Calu3 (cell line): ENCODE measurements at regions of chr10 and their contacts with region 1.

Region 1: DNA sequence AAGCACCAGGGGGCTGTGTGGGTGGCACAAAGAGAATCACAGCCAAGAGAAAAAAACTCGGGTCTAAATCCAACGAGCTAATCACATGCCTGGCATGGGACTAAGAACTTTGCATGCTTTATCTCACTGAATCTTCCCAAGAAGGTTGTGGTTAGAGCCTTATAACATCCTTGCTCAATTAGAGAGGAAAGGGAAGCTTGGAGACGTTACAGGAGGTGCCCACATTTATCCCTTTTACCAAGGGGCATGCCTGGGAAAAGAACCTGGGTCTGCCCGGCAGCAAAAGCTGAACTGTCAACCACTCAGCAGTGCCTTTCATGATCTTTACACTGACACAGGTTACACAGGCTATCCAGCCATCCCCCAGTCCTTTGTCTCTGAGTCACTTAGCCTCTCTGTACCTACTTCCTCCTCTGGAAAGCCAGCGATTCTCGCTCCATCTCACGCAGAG is 190.1 kb downstream of the PRPF18 start:
- DNase-seq: no peak
- H3K4me3 Mint-ChIP-seq: no peak overlapping the region
- H3K27ac Mint-ChIP-seq: no peak overlapping the region
- H3K4me1 Mint-ChIP-seq: peaks cover 18% of the 10 kb centered on the region
- H3K27me3 Mint-ChIP-seq: no peaks in the 10 kb centered on the region
- CTCF ChIP-seq: no peak

Region 2: DNA sequence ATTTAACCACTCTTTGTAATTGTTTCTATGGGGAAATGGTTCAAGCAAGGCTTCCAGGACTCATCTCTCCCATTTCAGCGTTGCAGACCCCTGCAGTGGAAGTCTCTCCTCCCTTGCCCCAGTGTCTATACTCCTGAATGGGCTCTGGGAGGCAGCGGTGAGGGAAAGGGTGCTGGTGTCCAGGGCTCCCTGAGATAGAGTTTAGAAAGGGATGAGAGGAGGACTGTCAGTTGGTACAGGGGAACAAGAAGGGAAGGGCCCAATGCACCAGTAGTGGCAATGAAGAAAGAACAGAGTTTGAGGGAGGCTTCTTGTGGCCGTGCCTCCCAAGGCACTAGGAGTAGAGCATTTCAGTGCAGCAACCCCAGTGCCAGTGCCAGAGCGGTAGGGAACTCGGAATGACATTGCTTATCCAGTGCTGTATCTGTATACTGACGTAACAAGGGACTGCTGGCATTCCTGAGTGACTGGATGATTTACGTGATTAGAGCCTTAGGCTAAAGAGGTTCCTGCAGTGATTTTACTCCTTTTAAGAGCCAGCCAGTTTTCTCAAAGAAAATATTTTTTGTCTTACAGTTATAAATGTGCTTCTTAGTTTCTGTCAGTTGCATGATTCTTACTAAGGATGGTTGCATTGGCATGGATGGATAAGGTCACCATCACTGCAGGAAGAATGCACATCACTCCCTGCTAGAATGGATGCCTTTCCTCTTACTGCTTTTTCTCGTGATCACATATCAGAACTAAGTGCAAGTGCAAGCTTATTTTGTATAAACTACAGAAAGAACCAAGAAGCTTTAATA is 162.2 kb before region 1 on chr10:
- CTCF ChIA-PET with region 1: no interaction called
- intact Hi-C with region 1: loop called (anchors 1 kb)
- DNase-seq: no peak
- H3K4me3 Mint-ChIP-seq: no peak overlapping the region
- H3K27ac Mint-ChIP-seq: no peak overlapping the region
- H3K4me1 Mint-ChIP-seq: no peaks in the 10 kb centered on the region
- H3K27me3 Mint-ChIP-seq: no peaks in the 10 kb centered on the region
- CTCF ChIP-seq: no peak

Region 3: GRCh38 chr10:13659897-13660550 is 116.9 kb before region 1 on chr10:
- CTCF ChIA-PET with region 1: no interaction called
- intact Hi-C with region 1: loop called (anchors 1 kb)
- DNase-seq: peak; percentile 53
- H3K4me3 Mint-ChIP-seq: no peak overlapping the region
- H3K27ac Mint-ChIP-seq: no peak overlapping the region
- H3K4me1 Mint-ChIP-seq: no peaks in the 10 kb centered on the region
- H3K27me3 Mint-ChIP-seq: no peaks in the 10 kb centered on the region
- CTCF ChIP-seq: peak; percentile 78

Region 4: DNA sequence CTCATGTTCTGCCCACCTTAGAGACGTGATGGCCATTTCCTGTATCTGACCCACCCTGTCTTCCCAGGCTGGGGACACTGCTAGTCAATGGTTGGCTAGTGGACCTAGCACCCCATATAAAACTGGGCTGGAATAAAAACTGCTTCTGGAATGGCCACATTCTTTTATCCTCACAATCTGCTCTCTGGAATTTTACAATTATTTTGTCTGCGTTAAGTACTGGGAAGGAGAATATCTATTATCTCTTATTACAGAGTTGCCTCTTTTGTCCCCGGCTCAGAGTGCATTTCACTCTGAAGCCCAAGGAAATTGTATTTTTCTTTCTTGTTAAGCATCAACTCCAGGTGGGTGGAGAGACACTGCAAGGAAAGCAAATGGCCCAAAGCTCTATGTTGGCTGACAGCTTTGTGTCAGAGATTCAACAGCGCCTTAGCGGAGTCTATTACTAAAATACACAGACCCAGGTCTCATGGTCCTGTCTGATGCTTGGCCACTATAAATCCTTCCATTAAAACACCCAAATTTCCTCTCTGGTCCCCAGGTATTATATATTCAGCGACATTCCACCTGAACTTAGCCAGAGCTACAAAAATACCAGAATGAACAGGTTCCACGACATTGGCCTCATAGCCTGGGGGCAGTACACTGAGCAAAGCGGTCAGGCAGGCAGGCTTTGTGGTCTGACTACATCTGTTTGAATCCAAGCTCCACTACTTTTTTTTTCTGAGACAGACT is 68.5 kb before region 1 on chr10:
- CTCF ChIA-PET with region 1: interaction called, 3 read pairs
- intact Hi-C with region 1: loop called (anchors 2 kb)
- DNase-seq: peak; percentile 74
- H3K4me3 Mint-ChIP-seq: peak overlapping the region; percentile 80
- H3K27ac Mint-ChIP-seq: peak overlapping the region; percentile 65
- H3K4me1 Mint-ChIP-seq: peaks cover 43% of the 10 kb centered on the region
- H3K27me3 Mint-ChIP-seq: no peaks in the 10 kb centered on the region
- CTCF ChIP-seq: no peak

Region 5: DNA sequence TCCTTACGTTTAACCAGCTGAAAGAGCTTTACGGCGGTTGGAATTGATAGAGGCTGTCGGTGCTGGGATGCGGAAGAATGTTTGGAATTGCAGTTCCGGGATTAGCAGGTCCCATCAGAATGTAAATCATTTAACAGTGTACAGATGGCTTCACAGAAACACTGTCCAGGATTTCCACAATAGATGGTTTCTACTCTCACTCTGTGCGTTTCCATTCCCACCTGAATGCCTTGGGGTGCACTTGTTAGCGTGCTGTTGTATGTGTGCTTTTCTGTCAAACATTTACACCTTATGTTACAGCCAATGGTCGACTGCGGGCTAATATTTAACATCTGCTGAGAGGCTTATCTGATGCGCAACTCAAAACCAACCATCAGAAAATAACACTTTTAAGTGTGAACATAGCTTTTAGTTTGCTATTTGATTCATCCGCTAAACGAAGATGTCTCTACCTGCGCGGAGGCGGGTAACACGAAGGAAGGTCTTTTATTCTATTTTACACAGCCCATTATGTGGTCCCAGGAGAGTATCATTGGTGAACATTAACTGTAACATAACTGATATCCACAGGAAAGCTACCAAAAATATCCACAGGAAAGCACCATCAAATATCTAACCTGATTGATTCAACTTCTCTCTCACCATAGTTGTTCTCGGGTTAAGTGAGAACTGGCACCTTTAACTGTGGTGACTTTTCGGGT is 11.1 kb before region 1 on chr10:
- CTCF ChIA-PET with region 1: no interaction called
- intact Hi-C with region 1: no loop called
- DNase-seq: peak; percentile 57
- H3K4me3 Mint-ChIP-seq: peak overlapping the region; percentile 66
- H3K27ac Mint-ChIP-seq: peak overlapping the region; percentile 62
- H3K4me1 Mint-ChIP-seq: peaks cover 26% of the 10 kb centered on the region
- H3K27me3 Mint-ChIP-seq: no peaks in the 10 kb centered on the region
- CTCF ChIP-seq: no peak